ENCODE measurements at regions of chr22 and their contacts with region 1.

Region 1: GRCh38 chr22:32531931-32532819 is 57.6 kb downstream of the FBXO7 start:
- DNase-seq: peak in 1 of 2 donors; percentile 88
- H3K4me3 ChIP-seq: peak overlapping the region in 1 of 3 donors; percentile 37
- H3K27ac ChIP-seq: peak overlapping the region; percentile 73 to 93
- H3K4me1 ChIP-seq: peaks cover 10 to 23% of the 10 kb centered on the region in 2 donors
- H3K27me3 ChIP-seq: no peaks in the 10 kb centered on the region
- CTCF ChIP-seq: no peak
- POLR2A ChIP-seq: no peak

Region 2: GRCh38 chr22:32501836-32502745 is 30.1 kb before region 1 on chr22:
- intact Hi-C with region 1: no loop called
- DNase-seq: no peak
- H3K4me3 ChIP-seq: no peak overlapping the region
- H3K27ac ChIP-seq: no peak overlapping the region
- H3K4me1 ChIP-seq: no peaks in the 10 kb centered on the region
- H3K27me3 ChIP-seq: no peaks in the 10 kb centered on the region
- CTCF ChIP-seq: no peak
- POLR2A ChIP-seq: no peak

Region 3: GRCh38 chr22:32545801-32546200 is 13.6 kb after region 1 on chr22:
- intact Hi-C with region 1: no loop called
- DNase-seq: no peak
- H3K4me3 ChIP-seq: no peak overlapping the region
- H3K27ac ChIP-seq: no peak overlapping the region
- H3K4me1 ChIP-seq: peaks cover 0 to 3% of the 10 kb centered on the region in 2 donors
- H3K27me3 ChIP-seq: no peaks in the 10 kb centered on the region
- CTCF ChIP-seq: no peak
- POLR2A ChIP-seq: no peak

Region 4: DNA sequence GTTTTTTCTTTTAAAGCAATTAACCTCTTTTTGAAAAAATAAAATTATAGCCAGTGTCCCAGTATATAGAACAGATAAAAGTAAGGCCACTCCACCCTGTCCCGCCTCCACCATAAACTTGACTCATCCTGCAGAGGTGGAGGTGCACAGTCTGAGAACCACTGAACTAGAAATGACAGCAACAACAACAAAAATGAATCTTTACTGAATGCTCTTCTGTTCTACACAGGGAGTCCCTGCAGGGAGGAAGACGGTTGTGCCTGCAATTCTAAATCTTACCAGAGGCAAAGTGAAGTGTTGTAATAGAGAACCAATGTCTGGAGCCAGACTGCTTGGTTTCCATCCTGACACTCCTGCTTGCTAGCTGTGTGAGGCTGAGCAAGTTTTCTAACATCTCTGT is 104.7 kb after region 1 on chr22:
- intact Hi-C with region 1: loop called (anchors 10 kb)
- DNase-seq: no peak
- H3K4me3 ChIP-seq: no peak overlapping the region
- H3K27ac ChIP-seq: no peak overlapping the region
- H3K4me1 ChIP-seq: no peaks in the 10 kb centered on the region
- H3K27me3 ChIP-seq: no peaks in the 10 kb centered on the region
- CTCF ChIP-seq: no peak
- POLR2A ChIP-seq: no peak

Region 5: GRCh38 chr22:32796865-32797573 is 264.8 kb after region 1 on chr22:
- intact Hi-C with region 1: loop called (anchors 10 kb)
- DNase-seq: peak; percentile 80 to 81
- H3K4me3 ChIP-seq: peak overlapping the region in 1 of 3 donors; percentile 47
- H3K27ac ChIP-seq: peak overlapping the region; percentile 46 to 63
- H3K4me1 ChIP-seq: peaks cover 0 to 2% of the 10 kb centered on the region in 2 donors
- H3K27me3 ChIP-seq: peaks cover 0 to 7% of the 10 kb centered on the region in 2 donors
- CTCF ChIP-seq: peak; percentile 76 to 92 (median 88)
- POLR2A ChIP-seq: no peak

Region 6: DNA sequence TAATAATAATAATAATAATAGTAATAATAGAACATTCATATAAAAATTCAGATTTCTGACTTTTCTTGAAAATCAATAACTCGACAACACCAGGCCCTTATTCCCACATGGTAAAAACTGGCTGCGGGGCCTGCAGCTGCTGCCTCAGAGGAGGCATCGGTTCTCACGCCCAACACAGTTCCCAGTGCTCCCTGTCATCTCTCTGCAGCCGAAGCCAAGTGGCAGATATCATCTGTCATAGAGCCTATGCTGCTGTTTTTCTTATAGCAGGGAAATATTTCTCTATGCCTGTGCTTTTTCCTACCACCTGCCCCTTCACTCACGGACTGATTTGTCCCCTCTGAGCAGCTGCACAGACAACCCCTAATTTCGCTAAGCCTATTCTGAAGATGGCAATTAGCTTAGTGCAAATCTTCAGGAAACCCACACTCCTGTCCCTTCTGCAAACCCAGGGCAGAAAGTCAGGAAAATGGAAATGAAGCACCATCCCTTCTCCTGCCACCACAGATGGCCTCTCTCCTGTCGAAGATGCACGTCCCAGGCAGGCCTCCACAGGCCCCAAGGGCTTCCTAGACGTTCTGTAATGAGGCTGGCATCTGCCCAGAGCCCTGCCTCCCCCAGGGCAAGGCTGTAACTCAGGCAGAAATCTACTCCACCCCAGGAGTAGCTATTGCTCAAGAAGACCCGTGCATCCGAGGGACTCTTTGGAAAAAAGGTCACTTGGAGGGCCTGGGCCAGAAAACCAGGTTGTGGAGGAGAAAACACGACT is 459.4 kb after region 1 on chr22:
- intact Hi-C with region 1: loop called (anchors 10 kb)
- DNase-seq: no peak
- H3K4me3 ChIP-seq: no peak overlapping the region
- H3K27ac ChIP-seq: peak overlapping the region in 1 of 2 donors; percentile 38
- H3K4me1 ChIP-seq: no peaks in the 10 kb centered on the region
- H3K27me3 ChIP-seq: no peaks in the 10 kb centered on the region
- CTCF ChIP-seq: no peak
- POLR2A ChIP-seq: no peak

Measured in breast epithelium (tissue), 4 donors.